HCT116 (cell line): ENCODE measurements at regions of chr2 and their contacts with region 1.

Region 1: DNA sequence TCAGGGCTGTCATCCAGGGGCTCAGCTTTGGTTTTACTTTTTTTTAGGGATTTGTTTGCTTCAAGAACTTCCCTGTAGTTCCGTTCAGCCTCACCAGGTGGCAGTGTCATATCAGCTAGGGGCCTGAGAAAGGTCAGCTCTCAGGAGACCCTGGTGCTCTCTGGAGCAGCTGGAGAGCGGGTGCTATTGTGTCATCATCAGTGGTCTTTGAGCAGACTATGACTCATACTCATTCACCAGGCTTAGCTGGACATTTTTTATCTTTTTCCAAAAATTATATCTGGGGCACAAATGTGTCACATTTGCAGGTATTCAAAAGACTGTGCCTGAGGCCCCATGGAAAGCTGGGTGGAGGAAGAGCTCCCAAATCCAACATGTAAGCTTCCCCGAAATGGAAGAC is 24.4 kb downstream of the ZNF892 start:
- DNase-seq: peak; percentile 66
- ATAC-seq: peak; percentile 55
- H3K4me3 ChIP-seq: no peak overlapping the region
- H3K27ac ChIP-seq: no peak overlapping the region
- H3K4me1 ChIP-seq: no peaks in the 10 kb centered on the region
- H3K27me3 ChIP-seq: no peaks in the 10 kb centered on the region
- CTCF ChIP-seq: peak; percentile 92 to 95 (median 95)
- POLR2A ChIP-seq: no peak
- RAD21 ChIP-seq: peak; percentile 99

Region 2: GRCh38 chr2:95149397-95149984 is 82.2 kb before region 1 on chr2:
- CTCF ChIA-PET with region 1: no interaction called
- POLR2A ChIA-PET with region 1: no interaction called
- RAD21 ChIA-PET with region 1: no interaction called
- intact Hi-C with region 1: no loop called
- DNase-seq: no peak
- ATAC-seq: no peak
- H3K4me3 ChIP-seq: no peak overlapping the region
- H3K27ac ChIP-seq: no peak overlapping the region
- H3K4me1 ChIP-seq: no peaks in the 10 kb centered on the region
- H3K27me3 ChIP-seq: no peaks in the 10 kb centered on the region
- CTCF ChIP-seq: no peak
- POLR2A ChIP-seq: no peak
- RAD21 ChIP-seq: no peak

Region 3: GRCh38 chr2:95314964-95315611 is 83.4 kb after region 1 on chr2:
- CTCF ChIA-PET with region 1: interaction called, 88 read pairs
- POLR2A ChIA-PET with region 1: interaction called, 4 read pairs
- RAD21 ChIA-PET with region 1: interaction called, 3 to 7 read pairs
- intact Hi-C with region 1: loop called (anchors 1 kb)
- DNase-seq: peak; percentile 32
- ATAC-seq: peak; percentile 92
- H3K4me3 ChIP-seq: no peak overlapping the region
- H3K27ac ChIP-seq: no peak overlapping the region
- H3K4me1 ChIP-seq: peaks cover 10 to 12% of the 10 kb centered on the region in 2 experiments; a peak in 2 of 4 replicates
- H3K27me3 ChIP-seq: no peaks in the 10 kb centered on the region
- CTCF ChIP-seq: peak; percentile 74 to 90 (median 80)
- POLR2A ChIP-seq: no peak
- RAD21 ChIP-seq: peak; percentile 90

Region 4: GRCh38 chr2:95345566-95346230 is 114.0 kb after region 1 on chr2:
- CTCF ChIA-PET with region 1: interaction called, 29 read pairs
- POLR2A ChIA-PET with region 1: no interaction called
- RAD21 ChIA-PET with region 1: no interaction called
- intact Hi-C with region 1: no loop called
- DNase-seq: peak; percentile 60
- ATAC-seq: peak; percentile 92
- H3K4me3 ChIP-seq: peak overlapping the region; percentile 48 to 62
- H3K27ac ChIP-seq: peak overlapping the region; percentile 49; the same call in 1 of the 2 replicates
- H3K4me1 ChIP-seq: peaks cover 0 to 26% of the 10 kb centered on the region in 2 experiments; a peak in 3 of 4 replicates
- H3K27me3 ChIP-seq: no peaks in the 10 kb centered on the region
- CTCF ChIP-seq: peak; percentile 63 to 95 (median 79); a peak in 5 of 6 replicates
- POLR2A ChIP-seq: no peak
- RAD21 ChIP-seq: peak; percentile 80